Transverse colon (tissue), 4 donors: ENCODE measurements at regions of chr5 and their contacts with region 1.

Region 1: DNA sequence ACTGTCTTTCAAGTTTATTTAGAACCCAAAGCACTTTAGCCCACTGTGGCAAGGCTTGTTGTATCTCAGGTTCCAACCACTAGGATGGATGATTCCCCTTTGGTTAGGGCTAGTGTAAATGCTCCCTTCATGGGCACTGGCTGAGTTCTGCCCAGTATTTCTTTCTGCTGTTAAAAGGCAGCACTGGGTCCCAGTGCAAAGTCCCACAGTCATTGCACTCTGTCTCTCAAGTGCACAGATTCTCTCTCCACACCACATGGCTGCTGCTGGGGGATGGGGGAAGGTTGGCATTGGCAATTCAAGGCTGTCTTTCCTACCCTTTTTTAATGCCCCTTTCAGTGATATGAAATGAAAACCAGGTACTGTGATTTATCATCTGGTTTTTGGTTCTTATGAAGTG is 7.2 kb upstream of the NPR3 start:
- DNase-seq: no peak
- H3K4me3 ChIP-seq: no peak overlapping the region
- H3K27ac ChIP-seq: no peak overlapping the region
- H3K4me1 ChIP-seq: no peaks in the 10 kb centered on the region
- H3K27me3 ChIP-seq: peaks cover 10% of the 10 kb centered on the region
- CTCF ChIP-seq: no peak
- EP300 ChIP-seq: no peak
- POLR2A ChIP-seq: no peak

Region 2: DNA sequence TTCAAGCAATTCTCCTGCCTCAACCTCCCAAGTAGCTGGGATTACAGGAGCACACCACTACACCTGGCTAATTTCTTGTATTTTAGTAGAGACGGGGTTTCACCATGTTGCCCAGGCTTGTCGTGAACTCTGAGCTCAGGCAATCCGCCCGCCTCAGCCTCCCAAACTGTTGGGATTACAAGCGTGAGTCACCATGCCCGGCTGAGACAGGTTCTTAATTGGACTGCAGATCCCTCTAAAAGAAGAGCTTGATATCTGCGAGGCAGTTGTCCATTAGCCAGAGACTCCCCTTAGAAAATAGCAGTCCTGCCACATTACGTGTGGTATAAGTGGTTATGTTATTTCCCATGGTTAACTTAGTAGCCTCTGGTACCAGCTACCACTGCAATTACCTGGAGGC is 39.4 kb before region 1 on chr5:
- in situ Hi-C with region 1: no loop called
- intact Hi-C with region 1: loop called (anchors 1 kb)
- DNase-seq: no peak
- H3K4me3 ChIP-seq: no peak overlapping the region
- H3K27ac ChIP-seq: no peak overlapping the region
- H3K4me1 ChIP-seq: no peaks in the 10 kb centered on the region
- H3K27me3 ChIP-seq: no peaks in the 10 kb centered on the region
- CTCF ChIP-seq: no peak
- EP300 ChIP-seq: no peak
- POLR2A ChIP-seq: no peak

Region 3: DNA sequence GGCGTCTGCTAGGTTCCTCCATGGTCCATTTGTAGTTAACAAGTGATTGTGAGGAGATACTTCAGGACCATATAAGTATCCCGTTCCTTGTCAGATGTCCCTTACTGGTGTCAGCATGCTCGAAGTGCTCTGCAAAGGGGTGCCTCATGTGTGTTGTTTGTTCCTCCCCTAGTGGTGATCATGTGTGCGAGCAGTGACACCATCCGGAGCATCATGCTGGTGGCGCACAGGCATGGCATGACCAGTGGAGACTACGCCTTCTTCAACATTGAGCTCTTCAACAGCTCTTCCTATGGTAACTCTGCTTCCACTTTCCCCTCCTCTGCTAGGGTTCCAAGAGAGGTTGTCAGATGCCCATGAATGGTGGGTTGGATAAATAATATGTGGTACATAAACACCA is 20.6 kb after region 1 on chr5:
- in situ Hi-C with region 1: no loop called
- intact Hi-C with region 1: no loop called
- DNase-seq: no peak
- H3K4me3 ChIP-seq: no peak overlapping the region
- H3K27ac ChIP-seq: no peak overlapping the region
- H3K4me1 ChIP-seq: no peaks in the 10 kb centered on the region
- H3K27me3 ChIP-seq: no peaks in the 10 kb centered on the region
- CTCF ChIP-seq: no peak
- EP300 ChIP-seq: no peak
- POLR2A ChIP-seq: no peak

Region 4: GRCh38 chr5:33800241-33800950 is 1096.4 kb after region 1 on chr5:
- in situ Hi-C with region 1: no loop called
- intact Hi-C with region 1: no loop called
- DNase-seq: no peak
- H3K4me3 ChIP-seq: no peak overlapping the region
- H3K27ac ChIP-seq: no peak overlapping the region
- H3K4me1 ChIP-seq: no peaks in the 10 kb centered on the region
- H3K27me3 ChIP-seq: no peaks in the 10 kb centered on the region
- CTCF ChIP-seq: no peak
- EP300 ChIP-seq: no peak
- POLR2A ChIP-seq: no peak